ENCODE measurements at regions of chr19 and their contacts with region 1.

Region 1: GRCh38 chr19:39792999-39793546 is 14.4 kb downstream of the LEUTX start:
- DNase-seq: peak; percentile 100
- ATAC-seq: peak; percentile 98
- H3K4me3 ChIP-seq: peak overlapping the region; percentile 29 to 42
- H3K27ac ChIP-seq: no peak overlapping the region
- H3K4me1 ChIP-seq: peaks cover 13% of the 10 kb centered on the region
- H3K27me3 ChIP-seq: peaks cover 29% of the 10 kb centered on the region
- CTCF ChIP-seq: no peak

Region 2: DNA sequence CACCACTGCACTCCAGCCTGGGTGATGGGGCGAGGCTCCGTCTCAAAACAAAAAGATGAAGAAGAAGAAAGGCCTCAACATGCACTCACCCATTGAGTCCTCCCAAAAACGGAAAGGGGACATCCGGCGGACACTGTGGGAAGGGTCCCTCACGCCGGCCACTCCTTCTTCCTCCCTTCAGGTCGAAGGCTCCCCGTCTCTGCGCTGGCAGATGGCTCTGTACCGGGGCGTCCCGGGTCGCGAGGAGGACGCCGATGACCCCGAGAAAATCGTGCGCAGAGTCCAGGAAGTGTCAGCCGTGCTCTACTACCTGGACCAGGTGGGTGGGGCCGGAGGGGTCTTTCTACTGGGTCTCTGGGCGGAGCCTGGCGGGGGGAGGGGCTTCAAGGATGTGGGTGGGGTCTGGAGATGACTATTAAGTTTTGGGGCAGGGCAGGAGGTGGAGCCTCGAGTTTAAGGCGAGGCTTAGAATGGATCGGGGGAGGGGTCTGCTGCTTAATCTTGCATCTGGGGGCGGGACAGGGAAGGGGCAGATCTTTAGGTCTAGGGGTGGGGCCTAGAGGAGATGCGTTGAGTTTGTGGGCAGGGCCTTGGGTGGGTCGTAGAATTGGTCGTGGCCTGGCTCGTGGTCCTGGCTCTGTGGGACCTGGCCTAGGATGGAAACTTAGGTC is 1265.5 kb before region 1 on chr19:
- CTCF ChIA-PET with region 1: no interaction called
- POLR2A ChIA-PET with region 1: no interaction called
- in situ Hi-C with region 1: loop called (anchors 10 kb)
- intact Hi-C with region 1: no loop called
- DNase-seq: no peak
- ATAC-seq: peak; percentile 20
- H3K4me3 ChIP-seq: peak overlapping the region in 1 of 2 experiments; percentile 32; a peak in 2 of 4 replicates
- H3K27ac ChIP-seq: no peak overlapping the region
- H3K4me1 ChIP-seq: peaks cover 4% of the 10 kb centered on the region; the same call in 1 of the 2 replicates
- H3K27me3 ChIP-seq: no peaks in the 10 kb centered on the region
- CTCF ChIP-seq: no peak

Region 3: DNA sequence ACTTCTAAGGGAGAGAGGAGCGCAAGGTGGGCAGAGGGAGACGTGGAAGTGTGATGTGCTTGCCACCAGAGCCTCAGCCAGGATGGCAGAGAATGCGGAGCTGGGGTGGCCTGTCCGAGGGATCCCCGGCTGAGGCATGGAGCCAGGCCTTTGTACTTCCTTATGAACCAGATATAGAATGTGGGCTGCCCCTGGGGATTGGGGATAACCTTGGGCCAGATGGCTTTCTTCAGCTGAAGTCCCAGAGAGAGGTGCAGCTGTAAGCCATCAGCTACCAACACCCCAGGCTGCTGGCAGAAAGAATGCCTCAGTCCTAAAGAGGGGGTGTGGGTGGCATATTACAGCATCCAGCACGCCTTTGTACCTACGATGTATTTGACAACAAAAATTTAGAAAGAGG is 792.0 kb before region 1 on chr19:
- CTCF ChIA-PET with region 1: interaction called, 11 read pairs
- POLR2A ChIA-PET with region 1: no interaction called
- in situ Hi-C with region 1: no loop called
- intact Hi-C with region 1: no loop called
- DNase-seq: no peak
- ATAC-seq: peak; percentile 44
- H3K4me3 ChIP-seq: no peak overlapping the region
- H3K27ac ChIP-seq: no peak overlapping the region
- H3K4me1 ChIP-seq: no peaks in the 10 kb centered on the region
- H3K27me3 ChIP-seq: no peaks in the 10 kb centered on the region
- CTCF ChIP-seq: no peak

Region 4: GRCh38 chr19:39671738-39672363 is 121.2 kb before region 1 on chr19:
- CTCF ChIA-PET with region 1: interaction called, 21 read pairs
- POLR2A ChIA-PET with region 1: no interaction called
- in situ Hi-C with region 1: no loop called
- intact Hi-C with region 1: no loop called
- DNase-seq: peak; percentile 100
- ATAC-seq: peak; percentile 95
- H3K4me3 ChIP-seq: no peak overlapping the region
- H3K27ac ChIP-seq: no peak overlapping the region
- H3K4me1 ChIP-seq: peaks cover 11% of the 10 kb centered on the region
- H3K27me3 ChIP-seq: peaks cover 57% of the 10 kb centered on the region
- CTCF ChIP-seq: no peak

Region 5: DNA sequence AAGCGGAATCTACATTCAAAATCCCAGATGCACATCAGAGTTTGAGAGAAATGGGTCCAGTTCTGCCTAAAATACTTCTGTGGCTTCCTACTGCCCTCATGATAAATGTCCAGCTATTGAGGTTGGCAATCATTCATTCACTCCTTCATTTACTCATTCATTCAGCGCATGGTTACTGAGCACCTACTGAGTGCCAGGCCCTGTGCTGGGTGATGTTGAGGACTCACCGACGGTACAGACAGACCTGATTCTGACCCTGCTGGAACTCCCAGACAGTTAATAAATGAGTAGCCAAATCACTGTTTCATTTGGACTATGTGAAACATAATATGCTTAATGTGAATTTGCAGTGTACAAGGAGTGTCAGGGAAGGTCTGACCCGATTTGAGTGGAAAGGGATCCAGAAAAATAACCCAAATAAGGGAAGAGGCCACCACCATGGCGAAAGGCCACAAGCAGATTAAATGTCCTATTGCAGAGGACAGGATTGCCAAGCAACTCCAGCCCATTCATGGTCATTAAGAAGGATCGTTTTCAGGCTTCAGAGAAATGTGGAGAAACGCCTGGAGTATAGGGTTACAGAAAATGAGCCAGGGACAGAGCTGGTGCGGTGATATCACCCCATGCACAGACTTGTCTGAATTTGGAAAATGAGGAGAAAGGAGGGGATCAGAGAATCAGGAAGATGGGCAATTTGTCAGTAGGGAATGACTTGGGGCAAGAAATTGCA is 20.4 kb after region 1 on chr19:
- CTCF ChIA-PET with region 1: interaction called, 248 read pairs
- POLR2A ChIA-PET with region 1: interaction called, 8 read pairs
- in situ Hi-C with region 1: no loop called
- intact Hi-C with region 1: no loop called
- DNase-seq: no peak
- ATAC-seq: peak; percentile 5; the same call in 1 of the 2 replicates
- H3K4me3 ChIP-seq: no peak overlapping the region
- H3K27ac ChIP-seq: no peak overlapping the region
- H3K4me1 ChIP-seq: no peaks in the 10 kb centered on the region
- H3K27me3 ChIP-seq: no peaks in the 10 kb centered on the region
- CTCF ChIP-seq: no peak

Region 6: DNA sequence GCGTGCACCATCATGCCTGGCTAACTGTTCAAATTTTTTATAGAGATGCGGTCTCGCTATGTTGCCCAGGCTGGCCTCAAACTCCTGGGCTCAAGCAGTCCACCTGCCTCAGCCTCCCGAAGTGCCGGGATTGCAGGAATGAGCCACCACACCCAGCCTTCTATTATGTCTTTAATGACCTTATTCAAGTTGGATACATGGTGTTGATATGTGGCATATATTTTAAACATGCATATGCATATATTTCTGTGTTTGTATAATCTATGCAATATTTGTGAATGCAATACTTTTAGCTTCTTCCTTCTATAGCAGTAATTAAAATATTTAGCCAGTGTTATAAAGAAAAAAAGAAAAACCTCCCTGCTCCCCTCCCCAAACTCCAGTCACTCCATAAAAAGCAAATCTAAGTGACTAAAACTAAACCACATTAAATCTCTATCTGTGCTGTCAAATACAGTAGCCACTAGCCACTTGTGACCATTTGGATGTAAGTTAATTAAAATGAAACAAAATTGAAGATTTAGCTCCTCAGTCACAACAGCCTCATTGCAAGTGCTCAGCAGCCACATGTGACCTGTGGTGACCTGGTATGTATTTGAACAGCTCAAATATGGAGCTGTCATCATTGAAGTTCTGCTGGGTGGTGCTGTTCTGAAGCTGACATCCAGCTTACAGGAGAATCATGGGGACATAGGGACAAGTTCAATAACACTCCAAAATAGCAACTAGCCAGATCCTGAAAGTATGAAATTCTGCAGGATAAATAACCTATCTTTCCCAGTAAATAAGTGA is 113.9 kb after region 1 on chr19:
- CTCF ChIA-PET with region 1: interaction called, 4 read pairs
- POLR2A ChIA-PET with region 1: interaction called, 17 read pairs
- in situ Hi-C with region 1: no loop called
- intact Hi-C with region 1: no loop called
- DNase-seq: no peak
- ATAC-seq: no peak
- H3K4me3 ChIP-seq: no peak overlapping the region
- H3K27ac ChIP-seq: no peak overlapping the region
- H3K4me1 ChIP-seq: no peaks in the 10 kb centered on the region
- H3K27me3 ChIP-seq: peaks cover 3% of the 10 kb centered on the region; the same call in 1 of the 2 replicates
- CTCF ChIP-seq: no peak

Region 7: DNA sequence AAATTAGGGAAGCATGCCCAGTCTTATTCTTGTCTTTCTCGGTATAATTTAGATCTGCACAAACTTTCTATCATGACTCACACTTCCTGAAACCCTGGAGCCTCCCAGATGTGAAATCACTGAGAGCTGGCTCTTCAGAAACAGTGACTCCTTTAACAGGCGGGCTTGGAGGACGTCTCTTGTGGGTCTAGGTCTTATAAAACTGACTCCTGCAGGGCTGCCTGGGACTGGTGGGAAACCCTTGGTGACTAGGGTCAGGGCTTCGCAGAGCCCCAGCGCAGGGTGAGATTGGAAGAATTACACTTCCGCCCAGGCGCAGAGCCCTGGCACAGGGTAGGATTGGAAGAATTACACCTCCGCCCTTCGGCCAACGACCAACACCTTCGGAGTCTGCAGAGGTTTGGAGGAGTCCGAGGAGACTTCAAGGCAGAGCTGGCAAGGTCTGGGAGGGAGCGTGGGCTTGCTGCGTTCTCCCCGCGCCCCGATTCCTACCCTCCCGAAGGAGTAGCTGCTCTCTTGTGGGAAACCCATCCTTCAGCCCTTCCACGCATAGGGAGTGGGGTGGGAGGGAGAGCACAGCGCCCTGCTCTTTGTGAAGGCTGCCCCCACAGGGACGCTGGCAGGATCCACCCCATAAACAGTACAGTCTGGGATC is 354.7 kb after region 1 on chr19:
- CTCF ChIA-PET with region 1: interaction called, 7 read pairs
- POLR2A ChIA-PET with region 1: interaction called, 12 read pairs
- in situ Hi-C with region 1: no loop called
- intact Hi-C with region 1: no loop called
- DNase-seq: peak; percentile 100
- ATAC-seq: peak; percentile 87
- H3K4me3 ChIP-seq: peak overlapping the region; percentile 24 to 50
- H3K27ac ChIP-seq: peak overlapping the region; percentile 42
- H3K4me1 ChIP-seq: peaks cover 14% of the 10 kb centered on the region
- H3K27me3 ChIP-seq: no peaks in the 10 kb centered on the region
- CTCF ChIP-seq: no peak

Region 8: DNA sequence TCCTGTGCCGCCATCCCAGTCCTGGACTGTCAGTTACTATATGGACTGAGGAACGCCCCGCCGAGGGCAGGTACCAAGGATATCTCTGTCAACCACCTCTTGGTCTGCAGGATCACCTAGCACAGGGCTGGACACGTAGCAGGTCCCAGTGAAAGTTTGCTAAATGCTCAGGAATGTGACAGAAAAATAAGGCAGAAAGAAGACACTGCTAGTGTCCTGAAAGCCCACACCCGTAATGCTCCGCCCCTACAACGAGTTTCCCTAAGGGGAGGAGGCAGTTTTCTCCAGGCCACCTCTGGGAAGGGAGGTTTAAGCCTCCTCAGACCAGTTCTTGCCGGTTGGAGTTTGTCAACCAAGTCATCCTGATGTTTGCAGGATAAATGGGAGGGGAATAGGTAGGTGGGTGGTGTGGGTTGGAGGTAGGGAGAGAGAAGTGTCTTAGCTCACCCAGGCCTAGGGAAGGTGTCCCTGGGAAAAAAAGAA is 652.7 kb after region 1 on chr19:
- CTCF ChIA-PET with region 1: no interaction called
- POLR2A ChIA-PET with region 1: no interaction called
- in situ Hi-C with region 1: no loop called
- intact Hi-C with region 1: no loop called
- DNase-seq: no peak
- ATAC-seq: no peak
- H3K4me3 ChIP-seq: no peak overlapping the region
- H3K27ac ChIP-seq: no peak overlapping the region
- H3K4me1 ChIP-seq: peaks cover 9% of the 10 kb centered on the region
- H3K27me3 ChIP-seq: no peaks in the 10 kb centered on the region
- CTCF ChIP-seq: no peak

Measured in Panc1 (cell line).